Right ventricle myocardium superior (tissue), 1 donor: ENCODE measurements at regions of chr16 and their contacts with region 1.

Region 1: DNA sequence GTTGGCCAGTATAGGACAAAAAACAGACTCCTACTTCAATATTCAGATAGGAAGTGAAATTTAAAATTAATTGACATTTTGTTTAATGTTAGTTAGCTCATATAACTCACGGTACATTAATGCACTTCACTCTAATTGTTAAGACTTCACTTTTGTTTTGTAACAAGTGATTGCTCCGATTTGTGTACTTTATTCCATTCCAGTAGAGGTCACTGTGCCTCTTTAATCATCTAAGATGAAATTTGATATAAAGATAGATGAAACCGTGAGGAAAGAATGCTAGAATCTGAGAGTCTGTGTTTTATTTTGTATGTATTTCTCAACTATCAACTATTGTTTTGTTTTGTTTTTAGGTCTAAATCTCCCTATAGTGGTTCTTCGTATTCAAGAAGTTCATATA is 29.0 kb downstream of the RBBP6 start:
- DNase-seq: no peak
- ATAC-seq: no peak

Region 2: GRCh38 chr16:24789881-24790280 is 221.5 kb after region 1 on chr16:
- intact Hi-C with region 1: loop called (anchors 10 kb)
- DNase-seq: no peak
- ATAC-seq: no peak

Region 3: GRCh38 chr16:24810951-24811843 is 242.8 kb after region 1 on chr16:
- intact Hi-C with region 1: loop called (anchors 5 kb)
- DNase-seq: no peak
- ATAC-seq: no peak